ENCODE measurements at regions of chr5 and their contacts with region 1.

Region 1: DNA sequence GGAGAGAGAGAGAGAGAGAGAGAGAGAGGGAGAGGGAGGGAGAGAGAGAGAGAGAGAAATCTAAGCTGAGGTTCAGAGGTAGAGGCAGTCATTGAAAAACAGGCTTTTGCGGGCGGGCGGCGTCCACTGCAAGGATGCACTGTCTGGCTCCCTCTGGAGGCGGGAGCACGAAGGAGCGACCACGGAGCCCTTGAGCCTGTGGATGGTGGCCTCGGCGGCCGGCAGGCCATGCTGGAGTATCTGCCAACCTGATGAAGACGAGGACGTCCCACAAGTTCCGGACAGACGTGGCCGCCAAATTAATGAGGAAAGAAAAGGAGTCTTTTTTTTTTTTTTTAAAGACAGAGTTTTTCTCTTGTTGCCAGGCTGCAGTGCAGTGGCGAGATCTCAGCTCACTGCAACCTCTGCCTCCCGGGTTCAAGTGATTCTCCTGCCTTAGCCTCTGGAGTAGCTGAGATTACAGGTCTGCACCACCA is 2.2 kb upstream of the CCDC125 start:
- DNase-seq: peak; percentile 60 to 75 (median 68)
- ATAC-seq: peak; percentile 84
- H3K4me3 ChIP-seq: no peak overlapping the region
- H3K4me3 Mint-ChIP-seq: peak overlapping the region; percentile 21 to 86 (median 62)
- H3K27ac ChIP-seq: no peak overlapping the region
- H3K27ac Mint-ChIP-seq: peak overlapping the region; percentile 54 to 93 (median 78)
- H3K4me1 ChIP-seq: peaks cover 5 to 11% of the 10 kb centered on the region in 2 donors
- H3K4me1 Mint-ChIP-seq: peaks cover 16 to 30% (median 22%) of the 10 kb centered on the region in 7 donors
- H3K27me3 ChIP-seq: no peaks in the 10 kb centered on the region
- H3K27me3 Mint-ChIP-seq: no peaks in the 10 kb centered on the region

Region 2: DNA sequence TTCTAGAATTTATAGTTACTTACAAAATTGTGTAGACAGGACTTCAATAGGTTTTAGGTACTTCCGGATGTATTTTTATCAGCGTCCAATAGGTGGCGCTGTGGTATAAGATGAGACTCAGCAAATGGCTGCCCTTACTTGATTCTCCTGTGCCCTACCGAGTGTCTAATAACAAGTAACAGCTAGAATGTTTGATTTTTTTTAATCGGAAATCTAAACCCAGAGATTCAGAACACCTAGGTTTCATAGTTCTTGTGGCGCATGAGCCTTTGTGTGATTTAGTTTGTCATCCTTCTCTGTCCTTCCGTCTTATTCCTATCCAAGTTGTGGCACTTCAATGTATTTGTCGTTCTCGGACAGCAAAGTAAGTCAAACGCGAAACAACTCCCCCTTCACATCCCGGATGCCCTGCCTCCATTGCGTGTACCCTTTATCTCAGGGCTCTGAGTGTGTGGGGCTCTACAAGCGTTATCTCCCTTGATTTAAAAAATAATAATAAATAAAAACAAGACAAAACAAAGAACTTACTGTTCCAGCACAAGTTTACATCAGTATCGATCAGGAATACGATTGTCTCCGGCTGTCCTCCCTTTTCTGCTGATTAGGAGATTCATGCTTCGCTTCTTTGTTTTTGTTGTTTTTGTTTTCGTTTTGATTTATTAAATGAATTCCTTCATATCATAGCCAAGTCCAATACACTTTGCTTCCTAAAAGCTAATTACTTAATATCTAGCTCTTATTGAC is 291.7 kb before region 1 on chr5:
- CTCF ChIA-PET with region 1: interaction called, 5 read pairs
- POLR2A ChIA-PET with region 1: interaction called, 4 read pairs
- intact Hi-C with region 1: loop called (anchors 1 to 2 kb)
- DNase-seq: peak; percentile 42 to 93 (median 88)
- ATAC-seq: peak; percentile 100
- H3K4me3 ChIP-seq: peak overlapping the region; percentile 72
- H3K4me3 Mint-ChIP-seq: peak overlapping the region; percentile 74 to 93 (median 88)
- H3K27ac ChIP-seq: peak overlapping the region; percentile 74
- H3K27ac Mint-ChIP-seq: peak overlapping the region; percentile 70 to 96 (median 92)
- H3K4me1 ChIP-seq: no peaks in the 10 kb centered on the region
- H3K4me1 Mint-ChIP-seq: peaks cover 0 to 14% (median 6%) of the 10 kb centered on the region in 7 donors
- H3K27me3 ChIP-seq: no peaks in the 10 kb centered on the region
- H3K27me3 Mint-ChIP-seq: peaks cover 0 to 5% (median 0%) of the 10 kb centered on the region in 5 donors

Region 3: GRCh38 chr5:69166686-69167492 is 167.9 kb before region 1 on chr5 and contains the start of gene CCNB1:
- CTCF ChIA-PET with region 1: interaction called, 4 read pairs
- POLR2A ChIA-PET with region 1: interaction called, 4 read pairs
- intact Hi-C with region 1: loop called in 1 of 2 experiments (anchors 1 kb)
- DNase-seq: peak; percentile 91 to 98 (median 94)
- ATAC-seq: peak; percentile 100
- H3K4me3 ChIP-seq: peak within 1 kb of the TSS; percentile 78
- H3K4me3 Mint-ChIP-seq: peak within 1 kb of the TSS; percentile 88 to 98 (median 94)
- H3K27ac ChIP-seq: peak within 1 kb of the TSS; percentile 68
- H3K27ac Mint-ChIP-seq: peak within 1 kb of the TSS; percentile 77 to 94 (median 90)
- H3K4me1 ChIP-seq: peaks cover 5 to 15% of the 10 kb centered on the region in 2 donors
- H3K4me1 Mint-ChIP-seq: peaks cover 17 to 44% (median 26%) of the 10 kb centered on the region in 7 donors
- H3K27me3 ChIP-seq: no peaks in the 10 kb centered on the region
- H3K27me3 Mint-ChIP-seq: no peaks in the 10 kb centered on the region
- total RNA-seq, gene CCNB1: 1.3 to 110 (median 3.4) TPM

Region 4: DNA sequence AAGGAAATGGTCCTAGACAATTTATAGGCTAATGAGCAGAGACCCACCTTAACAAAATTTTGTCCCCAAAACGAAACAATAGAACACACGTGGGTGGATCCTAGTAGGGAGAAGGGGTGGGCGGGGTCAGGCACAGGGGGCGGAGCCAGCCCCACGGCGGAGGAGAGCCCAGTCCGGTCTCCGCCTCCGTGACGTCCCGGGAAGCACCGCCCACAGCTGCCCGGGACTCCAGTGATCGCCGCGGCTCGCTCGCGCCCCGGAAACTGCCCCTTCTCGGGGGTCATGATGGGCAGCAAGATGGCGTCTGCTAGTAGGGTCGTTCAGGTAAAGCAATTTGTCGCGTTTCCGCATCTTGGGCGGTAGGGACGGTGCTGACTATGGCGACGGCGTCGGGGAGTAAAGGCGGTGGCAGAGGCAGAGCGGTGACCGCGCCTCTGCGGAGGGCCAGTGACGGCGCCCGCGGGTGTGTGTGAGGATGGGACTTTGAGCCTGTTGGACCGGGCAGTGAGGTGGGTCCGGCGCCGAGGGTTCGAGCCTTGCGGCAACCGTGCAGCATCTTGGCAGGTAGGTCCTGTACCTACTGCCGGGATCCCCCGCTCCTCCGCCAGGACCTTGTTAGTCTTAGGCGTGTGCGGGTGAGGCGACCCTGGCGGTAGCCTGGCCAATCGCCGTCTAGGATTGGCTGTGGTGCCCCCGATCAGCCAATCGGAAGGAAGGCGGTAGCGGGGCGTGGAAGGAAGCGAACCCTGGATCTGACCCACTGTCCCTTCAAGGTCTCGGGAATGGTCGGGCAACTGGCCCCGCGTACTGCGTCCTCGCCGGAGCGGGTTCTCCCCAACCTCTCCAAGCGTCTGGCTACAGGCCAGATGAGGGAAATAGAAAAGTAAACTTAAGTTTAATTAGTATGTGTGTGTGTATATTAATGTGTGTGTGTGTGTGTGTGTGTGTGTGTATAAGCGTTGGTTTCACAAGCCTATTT is 117.0 kb before region 1 on chr5:
- CTCF ChIA-PET with region 1: interaction called, 4 read pairs
- POLR2A ChIA-PET with region 1: interaction called, 3 read pairs
- intact Hi-C with region 1: loop called (anchors 1 kb)
- DNase-seq: peak; percentile 81 to 93 (median 86)
- ATAC-seq: peak; percentile 97
- H3K4me3 ChIP-seq: peak overlapping the region; percentile 100
- H3K4me3 Mint-ChIP-seq: peak overlapping the region; percentile 95 to 99 (median 96)
- H3K27ac ChIP-seq: peak overlapping the region; percentile 92
- H3K27ac Mint-ChIP-seq: peak overlapping the region; percentile 96 to 99 (median 97)
- H3K4me1 ChIP-seq: peaks cover 5 to 8% of the 10 kb centered on the region in 2 donors
- H3K4me1 Mint-ChIP-seq: peaks cover 2 to 37% (median 29%) of the 10 kb centered on the region in 7 donors
- H3K27me3 ChIP-seq: no peaks in the 10 kb centered on the region
- H3K27me3 Mint-ChIP-seq: no peaks in the 10 kb centered on the region

Region 5: GRCh38 chr5:69293895-69294294 is 40.9 kb before region 1 on chr5:
- CTCF ChIA-PET with region 1: interaction called, 3 read pairs
- POLR2A ChIA-PET with region 1: no interaction called
- intact Hi-C with region 1: loop called in 1 of 2 experiments (anchors 5 kb)
- DNase-seq: no peak
- ATAC-seq: no peak
- H3K4me3 ChIP-seq: no peak overlapping the region
- H3K4me3 Mint-ChIP-seq: no peak overlapping the region
- H3K27ac ChIP-seq: no peak overlapping the region
- H3K27ac Mint-ChIP-seq: no peak overlapping the region
- H3K4me1 ChIP-seq: no peaks in the 10 kb centered on the region
- H3K4me1 Mint-ChIP-seq: peaks cover 0 to 6% (median 0%) of the 10 kb centered on the region in 7 donors
- H3K27me3 ChIP-seq: no peaks in the 10 kb centered on the region
- H3K27me3 Mint-ChIP-seq: no peaks in the 10 kb centered on the region

Region 6: GRCh38 chr5:69369369-69370121 is 34.7 kb after region 1 on chr5 and contains the starts of genes AK6, RAD17 and TAF9:
- CTCF ChIA-PET with region 1: interaction called, 4 read pairs
- POLR2A ChIA-PET with region 1: interaction called, 9 read pairs
- intact Hi-C with region 1: loop called (anchors 1 kb)
- DNase-seq: peak; percentile 90 to 99 (median 95)
- ATAC-seq: peak; percentile 95
- H3K4me3 ChIP-seq: peak within 1 kb of the TSS; percentile 97
- H3K4me3 Mint-ChIP-seq: peak within 1 kb of the TSS; percentile 91 to 100 (median 97)
- H3K27ac ChIP-seq: peak within 1 kb of the TSS; percentile 99
- H3K27ac Mint-ChIP-seq: peak within 1 kb of the TSS; percentile 95 to 100 (median 99)
- H3K4me1 ChIP-seq: peaks cover 18 to 20% of the 10 kb centered on the region in 2 donors
- H3K4me1 Mint-ChIP-seq: peaks cover 20 to 63% (median 51%) of the 10 kb centered on the region in 7 donors
- H3K27me3 ChIP-seq: no peaks in the 10 kb centered on the region
- H3K27me3 Mint-ChIP-seq: no peaks in the 10 kb centered on the region
- total RNA-seq, gene AK6: 12.4 to 30.2 (median 24.0) TPM
- total RNA-seq, gene RAD17: 19.7 to 32.0 (median 26.3) TPM
- total RNA-seq, gene TAF9: 48.5 to 54.1 (median 50.4) TPM